CD8-positive, alpha-beta T cell (primary cell): ENCODE measurements at regions of chr2 and their contacts with region 1.

Region 1: GRCh38 chr2:64750817-64751285 is 97.1 kb upstream of the SERTAD2 start:
- DNase-seq: peak; percentile 95 to 100 (median 97)
- ATAC-seq: peak; percentile 81
- H3K4me3 ChIP-seq: peak overlapping the region; percentile 86 to 99
- H3K4me3 Mint-ChIP-seq: peak overlapping the region; percentile 99
- H3K27ac ChIP-seq: peak overlapping the region; percentile 88 to 95
- H3K27ac Mint-ChIP-seq: peak overlapping the region; percentile 95
- H3K4me1 ChIP-seq: peaks cover 19% of the 10 kb centered on the region
- H3K4me1 Mint-ChIP-seq: peaks cover 31% of the 10 kb centered on the region
- H3K27me3 ChIP-seq: no peaks in the 10 kb centered on the region
- H3K27me3 Mint-ChIP-seq: no peaks in the 10 kb centered on the region
- CTCF ChIP-seq: no peak

Region 2: GRCh38 chr2:64609227-64609941 is 141.5 kb before region 1 on chr2:
- CTCF ChIA-PET with region 1: no interaction called
- POLR2A ChIA-PET with region 1: interaction called, 7 read pairs
- intact Hi-C with region 1: loop called (anchors 1 to 2 kb)
- DNase-seq: peak; percentile 37 to 85 (median 66)
- ATAC-seq: peak; percentile 65
- H3K4me3 ChIP-seq: peak overlapping the region; percentile 56 to 63
- H3K4me3 Mint-ChIP-seq: peak overlapping the region; percentile 79
- H3K27ac ChIP-seq: peak overlapping the region in 1 of 2 experiments; percentile 49
- H3K27ac Mint-ChIP-seq: peak overlapping the region; percentile 66
- H3K4me1 ChIP-seq: peaks cover 26% of the 10 kb centered on the region
- H3K4me1 Mint-ChIP-seq: peaks cover 29% of the 10 kb centered on the region
- H3K27me3 ChIP-seq: no peaks in the 10 kb centered on the region
- H3K27me3 Mint-ChIP-seq: no peaks in the 10 kb centered on the region
- CTCF ChIP-seq: peak; percentile 23

Region 3: GRCh38 chr2:64698668-64699444 is 52.0 kb before region 1 on chr2:
- CTCF ChIA-PET with region 1: no interaction called
- POLR2A ChIA-PET with region 1: no interaction called
- intact Hi-C with region 1: no loop called
- DNase-seq: peak in 2 of 9 experiments; percentile 15 to 53
- ATAC-seq: peak; percentile 78
- H3K4me3 ChIP-seq: no peak overlapping the region
- H3K4me3 Mint-ChIP-seq: no peak overlapping the region
- H3K27ac ChIP-seq: no peak overlapping the region
- H3K27ac Mint-ChIP-seq: no peak overlapping the region
- H3K4me1 ChIP-seq: peaks cover 8% of the 10 kb centered on the region
- H3K4me1 Mint-ChIP-seq: peaks cover 37% of the 10 kb centered on the region
- H3K27me3 ChIP-seq: no peaks in the 10 kb centered on the region
- H3K27me3 Mint-ChIP-seq: no peaks in the 10 kb centered on the region
- CTCF ChIP-seq: no peak

Region 4: GRCh38 chr2:64730551-64731262 is 20.1 kb before region 1 on chr2:
- CTCF ChIA-PET with region 1: interaction called, 20 read pairs
- POLR2A ChIA-PET with region 1: interaction called, 48 read pairs
- intact Hi-C with region 1: loop called (anchors 1 kb)
- DNase-seq: peak in 8 of 9 experiments; percentile 29 to 83 (median 58)
- ATAC-seq: peak; percentile 75
- H3K4me3 ChIP-seq: peak overlapping the region; percentile 32 to 51
- H3K4me3 Mint-ChIP-seq: peak overlapping the region; percentile 87
- H3K27ac ChIP-seq: peak overlapping the region; percentile 69 to 78
- H3K27ac Mint-ChIP-seq: peak overlapping the region; percentile 99
- H3K4me1 ChIP-seq: peaks cover 43% of the 10 kb centered on the region
- H3K4me1 Mint-ChIP-seq: peaks cover 61% of the 10 kb centered on the region
- H3K27me3 ChIP-seq: no peaks in the 10 kb centered on the region
- H3K27me3 Mint-ChIP-seq: no peaks in the 10 kb centered on the region
- CTCF ChIP-seq: no peak

Region 5: GRCh38 chr2:64767670-64768468 is 17.0 kb after region 1 on chr2:
- CTCF ChIA-PET with region 1: interaction called, 6 read pairs
- POLR2A ChIA-PET with region 1: interaction called, 30 read pairs
- intact Hi-C with region 1: loop called (anchors 1 kb)
- DNase-seq: peak; percentile 45 to 90 (median 74)
- ATAC-seq: peak; percentile 74
- H3K4me3 ChIP-seq: peak overlapping the region; percentile 66 to 68
- H3K4me3 Mint-ChIP-seq: peak overlapping the region; percentile 92
- H3K27ac ChIP-seq: peak overlapping the region; percentile 61 to 88
- H3K27ac Mint-ChIP-seq: peak overlapping the region; percentile 93
- H3K4me1 ChIP-seq: peaks cover 11% of the 10 kb centered on the region
- H3K4me1 Mint-ChIP-seq: peaks cover 16% of the 10 kb centered on the region
- H3K27me3 ChIP-seq: no peaks in the 10 kb centered on the region
- H3K27me3 Mint-ChIP-seq: no peaks in the 10 kb centered on the region
- CTCF ChIP-seq: no peak

Region 6: DNA sequence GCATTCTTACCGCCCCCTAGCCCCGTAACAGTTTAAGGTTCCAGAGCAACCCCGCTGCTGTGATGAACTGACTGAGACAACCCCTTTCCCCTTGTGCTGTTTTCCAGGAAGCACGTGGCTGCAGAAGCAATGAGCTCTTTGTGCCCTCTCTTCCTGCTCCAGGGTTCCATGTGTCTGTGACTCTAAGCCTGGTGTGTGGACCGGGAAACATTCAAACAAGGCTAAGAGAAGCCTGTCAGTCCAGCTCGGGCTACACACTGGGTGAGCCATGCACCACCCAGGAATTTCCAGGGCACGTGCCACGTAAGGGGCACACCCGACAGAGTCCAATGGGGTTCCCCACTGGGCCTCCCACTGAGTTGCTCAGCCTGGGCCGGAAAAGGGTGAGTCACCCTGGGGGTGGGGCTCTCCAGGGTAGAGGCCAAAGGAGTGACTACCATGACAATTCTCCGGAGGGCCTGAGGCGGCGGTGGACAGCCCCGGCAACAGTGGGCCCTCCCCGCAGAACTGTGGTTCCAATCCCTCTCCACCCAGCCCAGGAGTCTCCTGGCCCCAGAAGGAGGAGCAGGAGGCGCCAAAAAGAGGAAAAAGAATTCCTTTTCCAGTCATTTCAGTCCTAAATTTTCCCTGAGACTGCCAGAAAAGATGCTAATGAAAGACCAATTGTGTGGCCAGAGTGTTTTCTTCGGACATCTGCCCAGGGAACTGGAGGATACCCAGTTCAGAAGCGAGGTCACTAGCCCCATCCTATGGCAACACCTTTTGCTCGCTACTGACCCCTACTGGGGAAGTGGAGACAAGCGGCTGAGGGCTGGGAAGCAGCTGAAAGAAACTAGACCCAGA is 80.5 kb after region 1 on chr2:
- CTCF ChIA-PET with region 1: interaction called, 8 read pairs
- POLR2A ChIA-PET with region 1: interaction called, 4 read pairs
- intact Hi-C with region 1: loop called (anchors 1 to 2 kb)
- DNase-seq: peak; percentile 67 to 91 (median 83)
- ATAC-seq: peak; percentile 88
- H3K4me3 ChIP-seq: peak overlapping the region in 1 of 2 experiments; percentile 32
- H3K4me3 Mint-ChIP-seq: peak overlapping the region; percentile 46
- H3K27ac ChIP-seq: peak overlapping the region in 1 of 2 experiments; percentile 4
- H3K27ac Mint-ChIP-seq: no peak overlapping the region
- H3K4me1 ChIP-seq: peaks cover 10% of the 10 kb centered on the region
- H3K4me1 Mint-ChIP-seq: peaks cover 11% of the 10 kb centered on the region
- H3K27me3 ChIP-seq: peaks cover 0 to 5% of the 10 kb centered on the region in 2 experiments
- H3K27me3 Mint-ChIP-seq: peaks cover 3% of the 10 kb centered on the region
- CTCF ChIP-seq: peak; percentile 94

Region 7: GRCh38 chr2:65056215-65057053 is 305.6 kb after region 1 on chr2 and contains the start of gene CEP68:
- CTCF ChIA-PET with region 1: no interaction called
- POLR2A ChIA-PET with region 1: no interaction called
- intact Hi-C with region 1: loop called (anchors 5 to 10 kb)
- DNase-seq: peak; percentile 89 to 98 (median 96)
- ATAC-seq: peak; percentile 89
- H3K4me3 ChIP-seq: peak within 1 kb of the TSS; percentile 85 to 86
- H3K4me3 Mint-ChIP-seq: peak within 1 kb of the TSS; percentile 99
- H3K27ac ChIP-seq: peak within 1 kb of the TSS; percentile 62 to 72
- H3K27ac Mint-ChIP-seq: peak within 1 kb of the TSS; percentile 97
- H3K4me1 ChIP-seq: peaks cover 70% of the 10 kb centered on the region
- H3K4me1 Mint-ChIP-seq: peaks cover 73% of the 10 kb centered on the region
- H3K27me3 ChIP-seq: no peaks in the 10 kb centered on the region
- H3K27me3 Mint-ChIP-seq: no peaks in the 10 kb centered on the region
- CTCF ChIP-seq: no peak
- total RNA-seq, gene CEP68: 19.9 to 20.5 TPM

Region 8: DNA sequence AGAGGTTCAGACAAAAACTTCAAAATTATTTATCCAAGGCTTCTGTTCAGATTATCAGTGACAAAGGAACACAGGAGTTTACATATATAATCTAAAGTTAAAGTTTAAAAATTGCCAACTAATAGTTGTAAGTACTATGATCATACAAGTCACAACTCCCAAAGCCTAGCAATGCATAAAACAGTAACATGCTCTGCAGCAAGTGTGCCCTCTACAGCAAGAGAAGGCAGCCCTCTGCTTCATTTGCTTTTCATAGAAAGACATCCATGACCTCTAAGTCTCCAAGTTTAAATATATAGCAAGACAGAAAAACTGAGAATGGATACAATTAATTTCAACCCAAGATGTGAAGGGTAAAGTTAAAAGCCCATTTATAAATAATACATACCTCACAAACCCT is 365.8 kb after region 1 on chr2:
- CTCF ChIA-PET with region 1: no interaction called
- POLR2A ChIA-PET with region 1: no interaction called
- intact Hi-C with region 1: no loop called
- DNase-seq: no peak
- ATAC-seq: no peak
- H3K4me3 ChIP-seq: no peak overlapping the region
- H3K4me3 Mint-ChIP-seq: no peak overlapping the region
- H3K27ac ChIP-seq: no peak overlapping the region
- H3K27ac Mint-ChIP-seq: no peak overlapping the region
- H3K4me1 ChIP-seq: peaks cover 43% of the 10 kb centered on the region
- H3K4me1 Mint-ChIP-seq: peaks cover 67% of the 10 kb centered on the region
- H3K27me3 ChIP-seq: no peaks in the 10 kb centered on the region
- H3K27me3 Mint-ChIP-seq: no peaks in the 10 kb centered on the region
- CTCF ChIP-seq: no peak

Region 9: GRCh38 chr2:65320042-65320725 is 569.3 kb after region 1 on chr2:
- CTCF ChIA-PET with region 1: no interaction called
- POLR2A ChIA-PET with region 1: no interaction called
- intact Hi-C with region 1: no loop called
- DNase-seq: peak in 1 of 9 experiments; percentile 29
- ATAC-seq: peak; percentile 44
- H3K4me3 ChIP-seq: no peak overlapping the region
- H3K4me3 Mint-ChIP-seq: no peak overlapping the region
- H3K27ac ChIP-seq: no peak overlapping the region
- H3K27ac Mint-ChIP-seq: no peak overlapping the region
- H3K4me1 ChIP-seq: no peaks in the 10 kb centered on the region
- H3K4me1 Mint-ChIP-seq: no peaks in the 10 kb centered on the region
- H3K27me3 ChIP-seq: no peaks in the 10 kb centered on the region
- H3K27me3 Mint-ChIP-seq: no peaks in the 10 kb centered on the region
- CTCF ChIP-seq: no peak